ENCODE measurements at regions of chr10 and their contacts with region 1.

Region 1: GRCh38 chr10:15209827-15210509 is 41.5 kb upstream of the NMT2 start:
- DNase-seq: peak; percentile 92
- ATAC-seq: peak; percentile 66
- H3K4me3 Mint-ChIP-seq: no peak overlapping the region
- H3K27ac Mint-ChIP-seq: peak overlapping the region; percentile 14
- H3K4me1 Mint-ChIP-seq: peaks cover 50% of the 10 kb centered on the region
- H3K27me3 Mint-ChIP-seq: no peaks in the 10 kb centered on the region
- CTCF ChIP-seq: peak; percentile 93

Region 2: GRCh38 chr10:15168781-15169554 is 41.0 kb before region 1 on chr10:
- CTCF ChIA-PET with region 1: interaction called, 3 read pairs
- POLR2A ChIA-PET with region 1: interaction called, 6 read pairs
- intact Hi-C with region 1: loop called (anchors 5 kb)
- DNase-seq: peak; percentile 98
- ATAC-seq: peak; percentile 90
- H3K4me3 Mint-ChIP-seq: peak overlapping the region; percentile 57
- H3K27ac Mint-ChIP-seq: peak overlapping the region; percentile 77
- H3K4me1 Mint-ChIP-seq: peaks cover 43% of the 10 kb centered on the region
- H3K27me3 Mint-ChIP-seq: no peaks in the 10 kb centered on the region
- CTCF ChIP-seq: no peak

Region 3: GRCh38 chr10:15231393-15231792 is 21.4 kb after region 1 on chr10:
- CTCF ChIA-PET with region 1: interaction called, 10 read pairs
- POLR2A ChIA-PET with region 1: no interaction called
- intact Hi-C with region 1: no loop called
- DNase-seq: no peak
- ATAC-seq: no peak
- H3K4me3 Mint-ChIP-seq: no peak overlapping the region
- H3K27ac Mint-ChIP-seq: no peak overlapping the region
- H3K4me1 Mint-ChIP-seq: no peaks in the 10 kb centered on the region
- H3K27me3 Mint-ChIP-seq: no peaks in the 10 kb centered on the region
- CTCF ChIP-seq: no peak

Region 4: GRCh38 chr10:15311569-15312280 is 101.8 kb after region 1 on chr10:
- CTCF ChIA-PET with region 1: no interaction called
- POLR2A ChIA-PET with region 1: no interaction called
- intact Hi-C with region 1: no loop called
- DNase-seq: no peak
- ATAC-seq: no peak
- H3K4me3 Mint-ChIP-seq: no peak overlapping the region
- H3K27ac Mint-ChIP-seq: no peak overlapping the region
- H3K4me1 Mint-ChIP-seq: peaks cover 2% of the 10 kb centered on the region
- H3K27me3 Mint-ChIP-seq: peaks cover under 1% of the 10 kb centered on the region
- CTCF ChIP-seq: no peak

Region 5: DNA sequence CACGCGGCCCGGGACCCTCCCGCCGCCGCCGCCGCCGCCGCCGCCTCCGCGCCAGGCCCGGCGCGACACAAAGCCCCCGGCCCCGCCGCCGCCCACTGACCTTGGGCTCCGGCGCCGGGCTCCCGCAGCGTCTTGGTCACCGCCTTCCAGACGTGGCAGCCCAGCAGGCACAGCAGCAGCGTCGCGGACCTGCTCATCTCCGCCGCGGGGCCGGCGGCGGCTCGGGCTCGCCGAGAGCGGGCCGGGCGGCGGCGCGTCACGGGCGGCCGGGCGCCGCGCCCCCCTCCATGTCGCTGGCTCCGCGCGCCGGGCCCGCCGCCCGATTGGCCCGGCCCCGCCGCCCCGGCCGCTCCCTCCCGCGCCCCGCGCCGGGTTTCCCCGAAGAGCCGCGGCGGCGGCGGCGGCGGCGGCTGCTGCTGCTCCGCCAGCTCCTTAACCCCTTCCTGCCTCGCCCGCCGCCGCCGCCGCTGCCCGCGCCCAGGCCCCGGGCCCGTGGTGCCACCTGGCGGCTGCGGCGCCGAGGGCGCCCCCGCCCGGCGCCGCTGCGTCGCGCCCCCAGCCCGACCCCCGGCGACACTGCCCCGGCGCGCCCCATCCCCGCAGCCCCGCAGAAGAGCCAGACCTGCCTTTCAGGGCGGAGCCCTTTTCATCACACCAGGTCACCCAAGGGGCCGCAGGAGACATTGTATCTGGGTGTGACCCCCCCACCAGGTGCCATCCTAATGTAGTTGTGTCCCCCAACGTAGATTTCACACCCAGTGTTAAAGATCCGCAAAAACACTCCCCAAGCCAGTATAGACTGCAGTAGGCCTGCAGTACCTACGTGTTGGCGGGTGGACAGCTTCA is 161.1 kb after region 1 on chr10 and contains the start of gene FAM171A1:
- CTCF ChIA-PET with region 1: interaction called, 3 read pairs
- POLR2A ChIA-PET with region 1: no interaction called
- intact Hi-C with region 1: loop called (anchors 2 kb)
- DNase-seq: peak; percentile 71
- ATAC-seq: peak; percentile 83
- H3K4me3 Mint-ChIP-seq: peak within 1 kb of the TSS; percentile 73
- H3K27ac Mint-ChIP-seq: peak within 1 kb of the TSS; percentile 68
- H3K4me1 Mint-ChIP-seq: peaks cover 9% of the 10 kb centered on the region
- H3K27me3 Mint-ChIP-seq: peaks cover 50% of the 10 kb centered on the region
- CTCF ChIP-seq: no peak
- total RNA-seq, gene FAM171A1: 4.2 to 5.1 TPM

Region 6: GRCh38 chr10:15494850-15495506 is 285.0 kb after region 1 on chr10:
- CTCF ChIA-PET with region 1: no interaction called
- POLR2A ChIA-PET with region 1: no interaction called
- intact Hi-C with region 1: no loop called
- DNase-seq: no peak
- ATAC-seq: no peak
- H3K4me3 Mint-ChIP-seq: no peak overlapping the region
- H3K27ac Mint-ChIP-seq: no peak overlapping the region
- H3K4me1 Mint-ChIP-seq: no peaks in the 10 kb centered on the region
- H3K27me3 Mint-ChIP-seq: peaks cover 16% of the 10 kb centered on the region
- CTCF ChIP-seq: no peak